GM12878 (cell line): ENCODE measurements at regions of chr9 and their contacts with region 1.

Region 1: GRCh38 chr9:27365707-27366376 is 68.9 kb upstream of the EQTN start:
- DNase-seq: peak; percentile 74
- ATAC-seq: peak; percentile 91
- H3K4me3 ChIP-seq: peak overlapping the region; percentile 51; the same call in 1 of the 2 replicates
- H3K27ac ChIP-seq: peak overlapping the region; percentile 71
- H3K4me1 ChIP-seq: peaks cover 40% of the 10 kb centered on the region
- H3K27me3 ChIP-seq: no peaks in the 10 kb centered on the region; a peak in 1 of 4 replicates
- CTCF ChIP-seq: no peak
- EP300 ChIP-seq: 0 out of 4 replicates have a peak, but pooled peaks of 1 of the 2 experiments have one; percentile 10
- POLR2A ChIP-seq: no peak
- RAD21 ChIP-seq: no peak

Region 2: DNA sequence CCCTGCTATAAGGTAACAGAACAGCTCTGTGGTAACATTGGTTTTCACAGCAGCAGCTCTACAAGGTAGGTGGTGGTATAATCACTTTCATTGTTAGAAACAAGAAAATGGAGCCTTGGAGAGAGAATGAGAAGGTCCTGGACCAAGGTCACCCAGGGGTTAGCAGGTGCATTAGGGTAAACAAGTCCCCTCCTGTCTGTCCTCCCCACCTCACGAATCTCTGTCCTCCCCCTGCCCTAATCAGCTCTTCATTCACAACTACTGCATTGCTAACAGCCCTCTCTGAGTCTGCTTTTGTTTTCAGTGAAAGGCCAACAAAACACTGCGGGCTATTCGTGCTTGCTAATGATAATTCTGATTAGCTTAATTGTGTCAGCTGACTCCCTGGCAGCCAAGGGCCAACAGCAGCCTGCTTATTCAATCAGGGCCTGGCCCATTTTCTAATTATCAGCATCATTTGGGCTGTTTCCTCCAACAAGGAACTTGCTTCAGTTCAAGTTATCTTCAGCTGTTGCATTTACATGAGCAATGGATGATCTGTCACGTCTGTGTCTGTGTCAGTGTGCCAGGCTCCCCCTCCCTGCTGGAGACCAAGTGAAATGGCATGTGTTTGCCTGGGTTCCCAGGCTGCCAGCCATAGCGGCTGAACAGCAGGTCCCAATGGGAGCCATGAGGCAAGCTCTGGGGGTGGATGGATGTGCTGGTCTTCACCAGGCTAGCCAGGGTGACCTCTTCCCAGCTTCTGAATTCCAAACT is 12.2 kb before region 1 on chr9:
- CTCF ChIA-PET with region 1: interaction called, 16 read pairs
- POLR2A ChIA-PET with region 1: interaction called, 3 read pairs
- RAD21 ChIA-PET with region 1: interaction called, 26 read pairs
- SMC1A ChIA-PET with region 1: interaction called, 54 read pairs
- in situ Hi-C with region 1: no loop called
- intact Hi-C with region 1: loop called (anchors 1 kb)
- DNase-seq: peak; percentile 46
- ATAC-seq: peak; percentile 88
- H3K4me3 ChIP-seq: no peak overlapping the region
- H3K27ac ChIP-seq: 0 out of 2 replicates have a peak overlapping the region, but pooled peaks have one; percentile 7
- H3K4me1 ChIP-seq: peaks cover 30% of the 10 kb centered on the region
- H3K27me3 ChIP-seq: no peaks in the 10 kb centered on the region
- CTCF ChIP-seq: no peak
- EP300 ChIP-seq: no peak
- POLR2A ChIP-seq: no peak
- RAD21 ChIP-seq: no peak

Region 3: DNA sequence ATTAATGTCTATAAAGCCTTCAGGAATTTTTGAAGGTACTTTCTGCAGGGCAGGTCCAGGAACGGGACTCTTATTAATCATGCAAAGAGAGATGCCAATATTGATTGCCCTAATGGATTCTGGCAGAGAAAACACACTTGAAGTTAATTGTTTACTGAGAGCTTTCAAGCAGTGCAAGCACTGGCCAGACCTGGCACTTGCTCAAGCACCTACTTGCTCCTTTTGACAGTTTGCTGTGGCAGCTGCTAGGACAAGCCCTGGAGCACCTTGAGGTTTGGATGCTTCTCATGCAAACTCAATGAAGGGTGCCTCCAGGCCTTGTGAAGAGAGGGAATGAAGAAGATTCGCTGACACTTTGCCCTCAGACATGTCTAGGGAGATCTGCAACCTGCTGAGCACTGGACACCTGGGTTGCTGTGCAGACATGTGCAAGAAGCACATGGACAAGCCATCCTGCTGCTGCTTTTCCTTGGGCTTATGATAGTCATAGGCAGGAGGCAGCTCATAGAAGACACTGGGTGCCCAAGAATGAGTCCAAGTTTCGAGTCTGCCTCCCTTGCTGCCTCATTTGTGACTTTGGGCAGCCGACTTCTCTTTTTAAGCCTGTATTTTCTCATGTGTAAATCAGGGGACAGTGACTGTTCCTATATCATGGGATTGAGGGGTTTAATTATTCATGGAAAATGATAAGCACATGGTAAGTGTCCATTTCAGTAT is 19.9 kb after region 1 on chr9:
- CTCF ChIA-PET with region 1: interaction called, 10 read pairs
- POLR2A ChIA-PET with region 1: interaction called, 3 read pairs
- RAD21 ChIA-PET with region 1: no interaction called
- SMC1A ChIA-PET with region 1: interaction called, 12 read pairs
- in situ Hi-C with region 1: no loop called
- intact Hi-C with region 1: no loop called
- DNase-seq: no peak
- ATAC-seq: no peak
- H3K4me3 ChIP-seq: no peak overlapping the region
- H3K27ac ChIP-seq: no peak overlapping the region
- H3K4me1 ChIP-seq: peaks cover 13% of the 10 kb centered on the region
- H3K27me3 ChIP-seq: no peaks in the 10 kb centered on the region
- CTCF ChIP-seq: no peak
- EP300 ChIP-seq: no peak
- POLR2A ChIP-seq: no peak
- RAD21 ChIP-seq: no peak

Region 4: GRCh38 chr9:27447031-27447683 is 81.3 kb after region 1 on chr9:
- CTCF ChIA-PET with region 1: no interaction called
- POLR2A ChIA-PET with region 1: no interaction called
- RAD21 ChIA-PET with region 1: interaction called, 5 read pairs
- SMC1A ChIA-PET with region 1: interaction called, 4 read pairs
- in situ Hi-C with region 1: no loop called
- intact Hi-C with region 1: loop called (anchors 5 kb)
- DNase-seq: no peak
- ATAC-seq: peak; percentile 54; the same call in 2 of the 3 replicates
- H3K4me3 ChIP-seq: no peak overlapping the region
- H3K27ac ChIP-seq: no peak overlapping the region
- H3K4me1 ChIP-seq: peaks cover 2% of the 10 kb centered on the region; the same call in 1 of the 2 replicates
- H3K27me3 ChIP-seq: no peaks in the 10 kb centered on the region
- CTCF ChIP-seq: no peak
- EP300 ChIP-seq: no peak
- POLR2A ChIP-seq: no peak
- RAD21 ChIP-seq: no peak

Region 5: DNA sequence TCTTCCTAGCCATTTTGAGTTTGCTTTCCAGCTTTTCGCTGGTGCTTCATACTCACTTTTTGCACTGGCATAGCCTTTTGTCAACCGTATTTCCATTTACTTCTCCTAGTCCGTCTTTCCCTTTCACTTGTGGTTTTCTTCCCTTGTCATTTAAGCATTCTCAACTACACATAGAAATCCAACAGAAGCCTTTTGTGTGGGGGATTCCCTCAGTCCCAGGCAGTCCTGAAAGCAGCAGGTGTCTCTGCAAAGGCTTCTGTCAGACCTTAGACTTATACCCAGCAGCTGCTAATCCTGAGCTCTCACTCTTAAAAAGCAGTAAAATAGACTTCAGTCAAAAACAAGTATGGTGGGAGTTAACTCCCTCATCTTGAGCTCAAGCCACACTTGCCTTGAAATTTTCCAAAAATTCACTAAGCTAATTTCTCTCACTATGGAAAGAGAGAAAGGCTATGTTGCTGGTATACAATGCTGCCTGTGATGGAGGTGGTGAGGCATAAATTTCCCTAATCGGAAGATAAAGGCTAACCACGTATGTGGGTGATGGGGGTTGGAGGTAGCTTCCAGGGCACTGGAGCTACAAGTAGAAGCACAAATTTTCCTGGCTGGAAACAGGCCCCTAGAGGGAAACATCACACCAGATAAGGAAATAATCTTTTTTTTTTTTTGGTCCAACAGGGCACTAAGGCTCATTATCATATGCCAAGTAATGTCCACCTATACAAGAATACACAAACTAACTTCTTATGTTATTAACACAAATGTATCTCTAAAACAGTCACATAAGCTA is 123.4 kb after region 1 on chr9:
- CTCF ChIA-PET with region 1: interaction called, 5 read pairs
- POLR2A ChIA-PET with region 1: no interaction called
- RAD21 ChIA-PET with region 1: interaction called, 3 read pairs
- SMC1A ChIA-PET with region 1: interaction called, 22 read pairs
- in situ Hi-C with region 1: no loop called
- intact Hi-C with region 1: no loop called
- DNase-seq: peak; percentile 50
- ATAC-seq: peak; percentile 88
- H3K4me3 ChIP-seq: peak overlapping the region; percentile 47; the same call in 1 of the 2 replicates
- H3K27ac ChIP-seq: peak overlapping the region; percentile 52; the same call in 1 of the 2 replicates
- H3K4me1 ChIP-seq: peaks cover 41% of the 10 kb centered on the region
- H3K27me3 ChIP-seq: no peaks in the 10 kb centered on the region
- CTCF ChIP-seq: no peak
- EP300 ChIP-seq: no peak
- POLR2A ChIP-seq: no peak
- RAD21 ChIP-seq: 0 out of 2 replicates have a peak, but pooled peaks have one; percentile 4

Region 6: GRCh38 chr9:27586304-27586703 is 220.5 kb after region 1 on chr9:
- CTCF ChIA-PET with region 1: no interaction called
- POLR2A ChIA-PET with region 1: no interaction called
- RAD21 ChIA-PET with region 1: no interaction called
- SMC1A ChIA-PET with region 1: no interaction called
- in situ Hi-C with region 1: no loop called
- intact Hi-C with region 1: no loop called
- DNase-seq: no peak
- ATAC-seq: peak; percentile 53
- H3K4me3 ChIP-seq: no peak overlapping the region
- H3K27ac ChIP-seq: peak overlapping the region; percentile 20; the same call in 1 of the 2 replicates
- H3K4me1 ChIP-seq: peaks cover 3% of the 10 kb centered on the region; the same call in 1 of the 2 replicates
- H3K27me3 ChIP-seq: no peaks in the 10 kb centered on the region
- CTCF ChIP-seq: no peak
- EP300 ChIP-seq: no peak
- POLR2A ChIP-seq: no peak
- RAD21 ChIP-seq: no peak